ENCODE measurements at regions of chr5 and their contacts with region 1.

Region 1: DNA sequence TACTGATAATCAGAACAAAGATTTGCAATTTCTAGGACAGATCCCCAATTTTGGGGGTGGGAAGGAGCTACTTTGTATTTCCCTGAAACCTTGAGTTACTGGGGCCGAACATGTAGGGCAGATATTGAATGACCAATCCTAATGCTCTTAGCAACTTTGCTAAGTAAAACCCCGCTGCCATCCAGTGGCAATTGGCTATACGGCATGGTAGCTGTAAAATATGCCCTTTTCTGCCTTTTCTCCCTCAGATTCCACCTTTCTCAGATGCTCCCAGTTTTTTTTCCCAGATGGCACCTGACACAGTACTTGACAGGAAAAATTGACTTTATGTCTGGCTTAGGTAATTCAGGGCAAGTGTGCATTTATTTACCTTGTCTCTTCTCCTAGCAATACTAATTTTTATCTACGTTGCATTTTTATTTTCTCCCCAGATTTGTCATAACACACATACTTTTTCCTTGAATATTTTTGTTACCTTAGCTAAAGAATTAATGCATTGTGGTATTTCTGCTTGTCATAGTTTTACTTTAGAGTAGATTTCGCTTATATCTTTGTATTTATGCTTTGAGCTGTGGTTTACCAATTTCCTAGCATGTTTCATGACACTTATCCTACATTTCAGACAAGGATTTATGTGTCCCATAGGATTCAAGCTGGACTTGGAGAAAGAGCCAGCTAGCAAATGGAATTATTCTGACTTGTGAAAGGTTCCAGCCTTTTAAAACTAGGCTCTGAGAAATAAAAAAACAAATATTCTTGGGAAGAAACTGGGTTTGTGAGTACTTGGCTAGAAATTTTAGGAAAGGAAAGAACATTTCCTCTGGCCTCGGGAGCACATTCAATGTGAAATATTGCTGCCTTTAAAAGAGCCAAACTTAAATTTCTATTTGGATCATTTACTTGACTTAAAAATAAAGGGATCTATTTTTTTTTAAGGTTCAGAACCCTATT is 37.4 kb downstream of the PIK3R1 start:
- DNase-seq: peak; percentile 78
- ATAC-seq: peak; percentile 93
- H3K4me3 ChIP-seq: no peak overlapping the region
- H3K27ac ChIP-seq: no peak overlapping the region
- H3K4me1 ChIP-seq: peaks cover 12% of the 10 kb centered on the region
- H3K27me3 ChIP-seq: no peaks in the 10 kb centered on the region
- CTCF ChIP-seq: peak; percentile 95
- POLR2A ChIP-seq: no peak
- RAD21 ChIP-seq: peak; percentile 98

Region 2: DNA sequence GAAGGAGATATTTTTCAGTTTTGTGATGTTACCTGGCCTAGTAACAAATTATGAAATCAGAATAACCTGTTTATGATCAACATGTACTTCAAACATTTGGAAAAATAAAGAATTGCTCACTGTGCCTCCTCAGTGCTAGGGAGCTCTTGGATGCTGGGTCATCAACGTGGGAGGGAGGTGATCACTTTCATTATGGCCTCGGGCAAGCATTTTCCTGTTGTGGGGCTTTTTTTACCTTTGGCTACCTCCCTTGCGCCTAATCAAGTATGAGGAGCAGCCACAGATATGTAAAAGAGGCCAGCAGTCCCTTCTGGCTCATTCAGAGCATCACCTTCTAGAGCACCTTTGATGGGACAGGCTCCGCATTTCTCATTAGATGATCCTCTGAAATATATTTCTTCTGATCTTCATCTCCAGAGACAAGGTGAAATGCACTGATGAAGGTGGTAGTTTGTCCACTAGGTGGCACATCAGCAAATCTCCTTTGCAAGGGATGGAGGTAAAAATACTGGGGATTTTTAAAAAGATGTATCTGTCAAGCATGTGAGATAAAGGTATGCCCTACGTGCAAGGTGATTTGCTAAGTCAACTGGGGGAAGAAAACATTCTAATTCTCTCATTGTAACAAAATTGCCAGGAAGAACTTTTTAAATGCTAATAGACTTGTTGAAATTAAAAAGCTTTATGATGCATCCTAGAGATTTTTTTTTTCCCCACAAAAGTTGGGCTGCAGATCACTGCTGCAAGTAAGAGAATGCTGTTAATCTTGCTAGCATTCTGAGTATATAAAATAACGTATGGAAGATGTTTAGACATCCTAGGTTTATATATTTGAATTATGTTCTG is 1438.6 kb before region 1 on chr5:
- CTCF ChIA-PET with region 1: no interaction called
- POLR2A ChIA-PET with region 1: no interaction called
- dilution Hi-C with region 1: no loop called
- in situ Hi-C with region 1: loop called (anchors 25 kb)
- intact Hi-C with region 1: loop called (anchors 10 kb)
- DNase-seq: peak; percentile 63
- ATAC-seq: peak; percentile 77
- H3K4me3 ChIP-seq: no peak overlapping the region
- H3K27ac ChIP-seq: no peak overlapping the region
- H3K4me1 ChIP-seq: no peaks in the 10 kb centered on the region
- H3K27me3 ChIP-seq: peaks cover 17% of the 10 kb centered on the region
- CTCF ChIP-seq: peak; percentile 73
- POLR2A ChIP-seq: no peak
- RAD21 ChIP-seq: peak; percentile 68

Region 3: GRCh38 chr5:67246108-67246507 is 1006.8 kb before region 1 on chr5:
- CTCF ChIA-PET with region 1: interaction called, 19 read pairs
- POLR2A ChIA-PET with region 1: no interaction called
- dilution Hi-C with region 1: no loop called
- in situ Hi-C with region 1: loop called (anchors 5 kb)
- intact Hi-C with region 1: loop called (anchors 1 kb)
- DNase-seq: peak; percentile 82
- ATAC-seq: peak; percentile 73
- H3K4me3 ChIP-seq: no peak overlapping the region
- H3K27ac ChIP-seq: no peak overlapping the region
- H3K4me1 ChIP-seq: no peaks in the 10 kb centered on the region; the same call in 1 of the 2 replicates
- H3K27me3 ChIP-seq: no peaks in the 10 kb centered on the region
- CTCF ChIP-seq: peak; percentile 72
- POLR2A ChIP-seq: no peak
- RAD21 ChIP-seq: peak; percentile 81

Region 4: DNA sequence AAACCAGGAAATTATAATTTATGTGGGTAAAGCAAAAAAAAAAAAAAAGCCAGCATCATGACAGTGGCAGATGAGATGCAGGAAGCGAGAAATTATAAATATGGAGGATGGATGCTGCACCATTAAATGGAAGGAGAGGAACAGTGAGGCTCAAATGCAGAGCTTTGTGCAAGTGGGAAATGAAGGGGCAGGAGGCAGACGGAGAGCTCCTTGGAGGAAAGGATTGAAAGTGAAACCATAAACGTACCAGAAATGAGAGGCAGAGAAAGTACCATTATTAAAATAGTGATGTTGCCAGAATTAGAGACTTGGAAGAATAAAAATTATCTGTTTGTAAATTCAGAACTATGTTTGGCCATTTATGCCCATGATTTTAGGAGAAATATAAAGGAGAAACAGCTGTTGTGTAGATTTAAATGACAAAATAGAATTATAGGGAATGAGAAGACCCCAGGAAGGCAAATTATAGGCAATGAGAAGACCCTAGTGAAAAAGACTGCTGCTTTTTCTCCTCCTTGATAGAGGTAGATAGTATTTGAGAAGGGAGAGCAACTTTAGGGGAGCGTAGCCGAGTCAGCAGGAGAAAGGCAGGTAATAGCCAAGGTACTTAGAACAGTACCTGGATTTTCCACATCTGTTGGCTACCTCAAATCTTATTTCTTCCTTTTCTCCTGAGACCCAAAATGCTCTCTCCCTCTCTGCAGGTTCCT is 715.4 kb before region 1 on chr5:
- CTCF ChIA-PET with region 1: no interaction called
- POLR2A ChIA-PET with region 1: no interaction called
- dilution Hi-C with region 1: no loop called
- in situ Hi-C with region 1: no loop called
- intact Hi-C with region 1: loop called (anchors 10 kb)
- DNase-seq: no peak
- ATAC-seq: no peak
- H3K4me3 ChIP-seq: peak overlapping the region; percentile 27; the same call in 1 of the 2 replicates
- H3K27ac ChIP-seq: no peak overlapping the region
- H3K4me1 ChIP-seq: no peaks in the 10 kb centered on the region
- H3K27me3 ChIP-seq: no peaks in the 10 kb centered on the region
- CTCF ChIP-seq: no peak
- POLR2A ChIP-seq: no peak
- RAD21 ChIP-seq: no peak